ENCODE measurements at regions of chr11 and their contacts with region 1.

Region 1: DNA sequence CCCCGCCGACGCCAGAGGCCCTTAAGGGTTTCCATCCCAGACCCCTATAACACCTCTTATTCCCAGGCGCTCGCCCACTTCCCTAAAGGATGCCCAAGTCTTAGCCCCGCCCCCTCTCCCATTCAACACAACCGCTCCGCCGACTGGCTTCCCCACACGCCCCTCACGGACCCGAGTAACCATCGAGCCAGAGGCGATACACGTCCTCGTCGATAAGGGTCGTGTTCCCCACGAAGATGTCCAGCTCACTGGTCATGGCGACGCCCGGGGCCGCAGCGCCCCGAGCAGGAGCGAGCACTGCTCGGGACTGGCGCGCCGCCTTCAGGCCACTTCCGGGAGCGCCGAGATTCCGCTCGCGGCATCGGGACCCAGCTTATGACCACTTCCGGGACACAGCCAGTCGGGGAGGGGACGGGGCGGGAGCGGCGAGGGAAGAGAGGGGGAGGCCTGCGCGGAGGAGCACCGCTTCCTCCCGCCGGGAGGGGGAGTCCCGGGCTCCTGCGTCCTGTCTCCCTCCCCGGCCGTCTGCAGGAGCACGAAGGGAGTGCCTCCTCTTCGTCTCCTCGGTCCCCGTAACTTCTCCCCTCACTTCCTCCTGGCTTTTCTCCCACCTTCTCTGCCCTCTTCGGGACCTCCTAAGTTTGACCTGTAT is at the start of gene FIBP:
- DNase-seq: peak; percentile 98
- H3K4me3 Mint-ChIP-seq: peak within 1 kb of the TSS; percentile 99
- H3K27ac Mint-ChIP-seq: peak within 1 kb of the TSS; percentile 89
- H3K4me1 Mint-ChIP-seq: peaks cover 57% of the 10 kb centered on the region
- H3K27me3 Mint-ChIP-seq: no peaks in the 10 kb centered on the region
- total RNA-seq, gene FIBP: 94.2 to 101 TPM

Region 2: DNA sequence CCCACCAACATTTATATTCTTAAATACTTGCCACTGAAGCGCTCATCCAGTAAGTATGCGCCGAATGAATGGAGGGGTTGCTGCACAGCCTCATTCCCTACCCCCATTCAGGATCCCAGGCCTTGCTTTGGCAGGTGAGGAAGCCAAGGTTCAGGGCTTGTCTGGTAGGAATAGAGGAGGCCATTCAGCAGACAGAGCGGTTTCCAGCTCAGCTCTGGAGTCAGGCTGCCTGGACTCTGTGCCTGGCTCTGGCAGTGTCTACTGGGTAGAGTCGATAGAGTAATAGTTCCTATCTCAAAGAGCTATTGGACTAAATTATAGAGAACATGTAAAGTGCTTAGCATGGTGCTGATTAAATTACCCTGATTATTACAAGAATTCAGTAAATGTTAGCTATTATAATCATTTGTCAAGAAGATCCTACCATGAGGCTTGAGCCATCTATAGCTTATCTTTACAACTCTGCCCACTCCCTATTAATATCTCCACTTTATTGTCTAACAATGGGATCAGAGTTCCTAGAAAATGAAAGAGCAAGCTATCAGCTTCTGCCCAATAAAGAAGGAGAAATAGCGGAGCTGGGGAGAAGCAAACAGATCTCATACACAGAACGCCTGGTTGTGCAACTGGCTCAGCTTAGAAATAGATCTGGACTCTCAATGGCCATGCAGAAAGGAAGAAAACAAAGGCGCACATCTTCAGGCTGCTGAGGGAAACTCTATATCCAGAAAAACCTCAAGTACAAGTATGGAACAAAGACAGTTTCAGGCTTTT is 61.1 kb before region 1 on chr11:
- CTCF ChIA-PET with region 1: interaction called, 12 read pairs
- POLR2A ChIA-PET with region 1: interaction called, 3 read pairs
- intact Hi-C with region 1: no loop called
- DNase-seq: no peak
- H3K4me3 Mint-ChIP-seq: no peak overlapping the region
- H3K27ac Mint-ChIP-seq: peak overlapping the region; percentile 18
- H3K4me1 Mint-ChIP-seq: peaks cover 19% of the 10 kb centered on the region
- H3K27me3 Mint-ChIP-seq: no peaks in the 10 kb centered on the region

Region 3: DNA sequence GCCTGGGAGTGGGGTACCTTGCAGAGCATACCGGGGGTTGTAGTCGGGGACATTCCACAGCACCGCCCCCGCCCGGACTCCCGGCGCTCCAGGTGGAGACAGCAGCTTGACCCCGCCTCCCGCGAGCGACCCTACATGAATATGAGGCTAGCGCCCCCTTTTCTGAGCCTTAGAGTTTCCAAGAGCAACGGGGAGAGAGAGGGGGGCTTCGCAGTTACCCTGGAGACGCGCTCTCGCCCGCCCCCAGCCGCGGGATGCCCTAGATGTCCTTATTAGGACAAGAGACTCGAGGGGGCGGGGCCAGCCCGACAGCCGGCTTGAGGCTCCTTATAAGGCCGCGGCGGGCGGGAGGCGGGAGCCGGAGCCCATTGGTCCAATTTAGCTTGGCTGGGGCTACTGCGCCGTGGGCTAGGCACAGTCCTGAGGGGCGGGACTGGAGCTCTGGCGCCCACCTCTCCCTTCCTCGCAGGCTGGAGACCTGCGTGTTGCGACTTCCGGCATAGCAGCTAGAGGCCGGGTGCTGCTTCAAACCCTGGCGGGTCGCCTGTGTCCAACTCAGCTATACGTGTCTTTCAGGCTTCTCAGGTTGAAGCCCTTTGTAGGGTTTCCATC is 29.0 kb before region 1 on chr11:
- CTCF ChIA-PET with region 1: interaction called, 277 read pairs
- POLR2A ChIA-PET with region 1: interaction called, 95 read pairs
- intact Hi-C with region 1: loop called (anchors 1 kb)
- DNase-seq: peak; percentile 99
- H3K4me3 Mint-ChIP-seq: peak overlapping the region; percentile 98
- H3K27ac Mint-ChIP-seq: peak overlapping the region; percentile 99
- H3K4me1 Mint-ChIP-seq: peaks cover 42% of the 10 kb centered on the region
- H3K27me3 Mint-ChIP-seq: no peaks in the 10 kb centered on the region

Region 4: GRCh38 chr11:65907878-65908277 is 19.6 kb after region 1 on chr11:
- CTCF ChIA-PET with region 1: interaction called, 192 read pairs
- POLR2A ChIA-PET with region 1: interaction called, 5 read pairs
- intact Hi-C with region 1: no loop called
- DNase-seq: no peak
- H3K4me3 Mint-ChIP-seq: no peak overlapping the region
- H3K27ac Mint-ChIP-seq: no peak overlapping the region
- H3K4me1 Mint-ChIP-seq: peaks cover 7% of the 10 kb centered on the region
- H3K27me3 Mint-ChIP-seq: peaks cover 8% of the 10 kb centered on the region

Region 5: GRCh38 chr11:65953513-65953912 is 65.2 kb after region 1 on chr11:
- CTCF ChIA-PET with region 1: interaction called, 39 read pairs
- POLR2A ChIA-PET with region 1: interaction called, 4 read pairs
- intact Hi-C with region 1: no loop called
- DNase-seq: no peak
- H3K4me3 Mint-ChIP-seq: no peak overlapping the region
- H3K27ac Mint-ChIP-seq: no peak overlapping the region
- H3K4me1 Mint-ChIP-seq: peaks cover 17% of the 10 kb centered on the region
- H3K27me3 Mint-ChIP-seq: no peaks in the 10 kb centered on the region

Region 6: GRCh38 chr11:65988791-65989592 is 100.7 kb after region 1 on chr11:
- CTCF ChIA-PET with region 1: interaction called, 156 read pairs
- POLR2A ChIA-PET with region 1: interaction called, 3 read pairs
- intact Hi-C with region 1: loop called (anchors 1 kb)
- DNase-seq: peak; percentile 95
- H3K4me3 Mint-ChIP-seq: no peak overlapping the region
- H3K27ac Mint-ChIP-seq: peak overlapping the region; percentile 74
- H3K4me1 Mint-ChIP-seq: peaks cover 4% of the 10 kb centered on the region
- H3K27me3 Mint-ChIP-seq: no peaks in the 10 kb centered on the region

Region 7: DNA sequence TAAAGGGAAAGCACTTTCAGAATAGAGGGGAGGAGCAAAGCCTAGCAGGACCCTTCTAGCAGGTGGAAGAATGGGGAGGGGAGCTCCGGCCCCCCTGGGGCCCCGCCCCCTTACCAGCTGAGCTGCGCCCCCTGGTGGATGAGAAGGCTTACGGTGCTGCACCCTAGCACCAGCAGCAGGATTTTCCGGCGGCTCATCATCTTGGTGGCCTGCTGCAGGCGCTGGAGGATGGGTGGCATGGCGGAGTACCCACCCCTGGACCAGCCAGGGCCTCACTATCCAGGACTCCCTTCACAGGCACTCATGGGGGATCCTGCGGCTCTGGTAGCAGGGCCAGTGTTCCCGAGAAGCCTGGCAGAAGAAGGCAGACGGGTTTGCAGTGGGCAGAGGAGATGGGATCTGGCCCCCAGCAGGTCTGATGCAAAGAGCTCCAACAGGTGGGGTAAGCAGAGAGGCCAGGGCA is 156.9 kb after region 1 on chr11:
- CTCF ChIA-PET with region 1: interaction called, 12 read pairs
- POLR2A ChIA-PET with region 1: no interaction called
- intact Hi-C with region 1: no loop called
- DNase-seq: peak; percentile 88
- H3K4me3 Mint-ChIP-seq: peak overlapping the region; percentile 42
- H3K27ac Mint-ChIP-seq: peak overlapping the region; percentile 82
- H3K4me1 Mint-ChIP-seq: peaks cover 21% of the 10 kb centered on the region
- H3K27me3 Mint-ChIP-seq: peaks cover 5% of the 10 kb centered on the region

Region 8: DNA sequence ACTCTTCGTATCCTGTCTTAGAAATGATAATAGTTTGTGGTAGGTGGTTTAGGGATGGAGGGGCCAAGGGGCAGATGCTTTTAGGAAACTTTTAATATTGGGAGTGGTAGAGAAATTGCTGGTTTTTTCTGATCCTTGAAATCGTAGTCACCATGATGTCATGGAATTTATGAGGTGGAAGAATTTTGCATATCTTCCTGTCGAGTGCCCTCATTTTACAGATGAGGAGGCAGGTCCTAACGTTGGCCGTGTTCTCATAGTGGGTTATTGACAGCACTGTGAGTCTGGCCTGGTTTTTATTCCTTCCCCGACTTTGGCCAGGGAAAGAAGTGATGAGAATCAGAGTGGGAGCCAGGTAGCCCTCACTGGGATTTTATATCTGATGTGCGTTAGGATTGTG is 172.9 kb after region 1 on chr11:
- CTCF ChIA-PET with region 1: no interaction called
- POLR2A ChIA-PET with region 1: no interaction called
- intact Hi-C with region 1: no loop called
- DNase-seq: no peak
- H3K4me3 Mint-ChIP-seq: no peak overlapping the region
- H3K27ac Mint-ChIP-seq: peak overlapping the region; percentile 83
- H3K4me1 Mint-ChIP-seq: peaks cover 57% of the 10 kb centered on the region
- H3K27me3 Mint-ChIP-seq: no peaks in the 10 kb centered on the region

Region 9: GRCh38 chr11:66075273-66075672 is 187.0 kb after region 1 on chr11:
- CTCF ChIA-PET with region 1: no interaction called
- POLR2A ChIA-PET with region 1: no interaction called
- intact Hi-C with region 1: no loop called
- DNase-seq: no peak
- H3K4me3 Mint-ChIP-seq: no peak overlapping the region
- H3K27ac Mint-ChIP-seq: peak overlapping the region; percentile 42
- H3K4me1 Mint-ChIP-seq: peaks cover 61% of the 10 kb centered on the region
- H3K27me3 Mint-ChIP-seq: no peaks in the 10 kb centered on the region

Measured in activated CD4-positive, alpha-beta memory T cell treated with anti-CD3 and anti-CD28 coated beads for 36 hours (primary cell).